Right ventricle myocardium superior (tissue), 1 donor: ENCODE measurements at regions of chr1 and their contacts with region 1.

Region 1: GRCh38 chr1:235513495-235514366 is 9.5 kb upstream of the B3GALNT2 start:
- DNase-seq: no peak
- ATAC-seq: peak; percentile 56

Region 2: DNA sequence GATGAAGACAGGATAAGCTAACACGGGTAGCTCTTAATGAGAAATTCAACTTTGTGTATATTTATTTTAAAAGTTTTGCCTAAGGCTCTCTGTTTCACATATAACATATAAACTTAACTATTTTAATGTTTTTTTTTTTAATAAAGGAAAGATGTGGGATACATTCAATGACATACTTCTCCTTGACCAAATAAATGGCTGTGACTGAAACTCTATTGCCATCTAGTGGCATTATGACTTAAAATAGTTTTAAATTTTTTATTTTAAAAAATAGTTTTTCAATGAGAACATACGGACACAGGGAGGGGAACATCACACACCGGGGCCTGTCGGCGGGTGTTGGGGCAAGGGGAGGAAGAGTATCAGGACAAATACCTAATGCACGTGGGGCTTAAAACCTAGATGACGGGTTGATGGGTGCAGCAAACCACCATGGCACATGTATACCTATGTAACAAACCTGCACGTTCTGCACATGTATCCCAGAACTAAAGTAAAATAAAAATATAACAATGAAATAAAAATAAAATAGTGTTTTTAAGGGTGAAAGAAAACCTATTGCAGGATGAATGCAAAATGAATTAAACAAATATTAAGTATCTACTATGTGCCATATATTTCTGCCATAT is 269.5 kb after region 1 on chr1:
- intact Hi-C with region 1: loop called (anchors 5 kb)
- DNase-seq: no peak
- ATAC-seq: no peak

Region 3: DNA sequence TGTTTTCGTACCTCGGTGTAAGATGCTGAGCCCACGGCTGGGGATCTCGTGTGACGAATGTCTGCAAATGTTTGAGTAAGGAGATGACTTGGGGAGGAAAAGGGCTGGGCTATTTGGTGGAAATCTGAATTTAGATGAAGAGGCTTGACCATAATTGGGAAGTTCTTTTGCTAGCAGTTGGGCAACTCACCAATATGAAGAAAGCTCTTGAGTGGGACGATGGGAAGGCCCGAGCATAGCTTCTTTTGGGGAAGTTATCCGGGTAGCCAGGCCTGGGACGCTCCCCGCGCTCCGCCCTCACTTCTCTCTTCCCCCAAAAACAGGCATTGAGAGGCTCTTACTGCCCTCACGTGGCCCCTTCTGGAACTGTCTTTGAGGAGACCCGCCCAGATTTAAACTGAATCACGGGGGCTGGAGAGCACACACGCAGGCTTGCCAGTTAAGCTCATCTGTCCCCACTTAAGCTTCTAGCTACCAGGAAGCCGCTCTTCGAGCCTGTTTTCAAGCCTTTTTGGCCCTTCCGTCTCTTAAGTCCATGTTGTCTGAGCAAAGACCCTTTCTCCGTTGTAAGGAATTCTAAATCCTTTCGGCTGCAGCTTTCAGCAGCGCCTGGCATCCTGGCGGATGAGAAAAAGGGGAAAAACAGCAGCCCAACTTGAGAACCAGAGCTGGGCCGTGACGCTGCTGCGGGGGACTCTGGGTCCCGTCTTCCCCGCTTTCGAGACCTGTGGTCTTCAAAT is 458.0 kb after region 1 on chr1:
- intact Hi-C with region 1: loop called (anchors 10 kb)
- DNase-seq: peak; percentile 95
- ATAC-seq: peak; percentile 91